ENCODE measurements at regions of chr1 and their contacts with region 1.

Region 1: DNA sequence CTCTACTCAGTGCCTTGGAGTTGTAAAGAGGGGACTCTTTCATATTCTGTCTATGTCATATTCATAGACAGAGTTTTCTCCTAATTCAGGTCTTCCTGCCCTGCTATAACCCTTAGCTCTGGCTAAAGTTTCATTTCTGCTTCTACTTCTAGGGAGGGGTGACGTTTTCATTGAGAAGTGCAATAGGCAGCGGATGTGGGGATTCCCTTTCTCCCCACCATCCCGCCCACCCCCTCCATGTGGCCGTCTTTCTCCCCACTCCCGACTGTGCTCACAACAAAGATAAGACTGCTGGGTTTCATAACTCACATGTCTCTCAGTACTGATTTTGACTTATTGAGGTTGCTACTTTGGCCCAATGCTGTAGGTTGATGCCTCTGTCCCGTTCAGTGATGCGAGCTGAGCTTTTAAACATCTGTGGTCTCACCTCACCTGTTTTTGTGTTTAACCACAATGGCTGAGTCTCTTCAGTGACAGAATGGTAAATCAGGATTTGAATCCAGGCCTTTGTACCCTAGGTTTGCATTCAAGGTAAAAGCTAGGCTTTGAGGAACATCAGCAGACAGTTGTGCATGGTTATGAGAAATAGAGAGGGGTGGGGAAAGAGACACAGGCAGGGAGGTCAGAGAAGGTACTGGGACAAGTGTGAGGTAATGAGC is 7.8 kb upstream of the KIF14 start:
- DNase-seq: no peak
- H3K4me3 Mint-ChIP-seq: peak overlapping the region; percentile 41
- H3K27ac Mint-ChIP-seq: peak overlapping the region; percentile 65
- H3K4me1 Mint-ChIP-seq: peaks cover 35% of the 10 kb centered on the region
- H3K27me3 Mint-ChIP-seq: peaks cover 22% of the 10 kb centered on the region

Region 2: DNA sequence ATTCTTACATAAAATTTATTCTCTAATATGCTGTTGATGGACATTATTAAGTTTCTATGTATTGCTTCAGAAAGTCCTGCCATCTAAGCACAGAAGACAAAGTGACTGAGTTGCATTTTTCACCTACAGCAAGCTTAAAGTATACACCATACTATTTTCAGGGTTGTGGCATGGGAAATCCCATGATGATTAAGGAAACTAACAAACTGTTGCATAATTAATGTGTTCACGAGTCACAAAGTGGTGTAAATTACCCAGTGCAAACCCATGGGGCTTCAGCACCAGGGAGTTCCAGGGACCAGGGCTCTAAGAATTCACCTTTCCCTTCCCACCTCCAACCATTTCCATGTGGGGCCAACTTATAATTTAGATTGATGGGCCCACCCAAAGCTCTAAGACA is 682.8 kb before region 1 on chr1:
- intact Hi-C with region 1: loop called (anchors 5 kb)
- DNase-seq: no peak
- H3K4me3 Mint-ChIP-seq: no peak overlapping the region
- H3K27ac Mint-ChIP-seq: no peak overlapping the region
- H3K4me1 Mint-ChIP-seq: peaks cover 14% of the 10 kb centered on the region
- H3K27me3 Mint-ChIP-seq: peaks cover 47% of the 10 kb centered on the region

Region 3: GRCh38 chr1:200639790-200640669 is 11.7 kb after region 1 on chr1:
- intact Hi-C with region 1: loop called (anchors 1 kb)
- DNase-seq: no peak
- H3K4me3 Mint-ChIP-seq: no peak overlapping the region
- H3K27ac Mint-ChIP-seq: peak overlapping the region; percentile 4
- H3K4me1 Mint-ChIP-seq: peaks cover 7% of the 10 kb centered on the region
- H3K27me3 Mint-ChIP-seq: peaks cover 4% of the 10 kb centered on the region

Region 4: GRCh38 chr1:200653022-200653462 is 24.7 kb after region 1 on chr1:
- intact Hi-C with region 1: loop called (anchors 1 kb)
- DNase-seq: no peak
- H3K4me3 Mint-ChIP-seq: no peak overlapping the region
- H3K27ac Mint-ChIP-seq: peak overlapping the region; percentile 55
- H3K4me1 Mint-ChIP-seq: peaks cover 27% of the 10 kb centered on the region
- H3K27me3 Mint-ChIP-seq: no peaks in the 10 kb centered on the region

Region 5: GRCh38 chr1:200669314-200670241 is 41.2 kb after region 1 on chr1 and contains the start of gene DDX59:
- intact Hi-C with region 1: loop called (anchors 1 kb)
- DNase-seq: peak; percentile 89
- H3K4me3 Mint-ChIP-seq: peak within 1 kb of the TSS; percentile 93
- H3K27ac Mint-ChIP-seq: peak within 1 kb of the TSS; percentile 92
- H3K4me1 Mint-ChIP-seq: peaks cover 25% of the 10 kb centered on the region
- H3K27me3 Mint-ChIP-seq: no peaks in the 10 kb centered on the region
- total RNA-seq, gene DDX59: 18.9 and 20.4 TPM in 2 replicates

Measured in activated T-helper 2 cell treated with anti-CD3 and anti-CD28 coated beads, Interferon-gamma antibody, Interleukin-2, Interleukin-4, amounts not matched to agents 10 μg/mL and 5 μg/mL and 100 μg/mL, durations not matched to agents 14 hours and 24 hours and 36 hours (primary cell).